Left lung (tissue), 14 donors: ENCODE measurements at regions of chr21 and their contacts with region 1.

Region 1: GRCh38 chr21:43718872-43719747 is at the start of gene PDXK:
- DNase-seq: peak; percentile 82 to 99 (median 90)
- ATAC-seq: peak; percentile 87
- H3K4me3 ChIP-seq: peak within 1 kb of the TSS; percentile 96 to 99
- H3K27ac ChIP-seq: peak within 1 kb of the TSS; percentile 96 to 98
- H3K4me1 ChIP-seq: peaks cover 23 to 52% of the 10 kb centered on the region in 2 donors
- H3K27me3 ChIP-seq: no peaks in the 10 kb centered on the region
- CTCF ChIP-seq: no peak
- polyA plus RNA-seq, gene PDXK: 36.9 to 55.3 (median 39.5) TPM

Region 2: GRCh38 chr21:43295066-43295958 is 423.8 kb before region 1 on chr21:
- intact Hi-C with region 1: no loop called
- DNase-seq: no peak
- ATAC-seq: no peak
- H3K4me3 ChIP-seq: no peak overlapping the region
- H3K27ac ChIP-seq: no peak overlapping the region
- H3K4me1 ChIP-seq: no peaks in the 10 kb centered on the region
- H3K27me3 ChIP-seq: no peaks in the 10 kb centered on the region
- CTCF ChIP-seq: no peak

Region 3: GRCh38 chr21:43613755-43614638 is 105.1 kb before region 1 on chr21:
- intact Hi-C with region 1: no loop called
- DNase-seq: peak in 2 of 4 donors; percentile 24 to 63
- ATAC-seq: no peak
- H3K4me3 ChIP-seq: no peak overlapping the region
- H3K27ac ChIP-seq: no peak overlapping the region
- H3K4me1 ChIP-seq: peaks cover 5 to 14% of the 10 kb centered on the region in 2 donors
- H3K27me3 ChIP-seq: no peaks in the 10 kb centered on the region
- CTCF ChIP-seq: no peak

Region 4: GRCh38 chr21:43775795-43776430 is 56.8 kb after region 1 on chr21 and contains the start of gene CSTB:
- intact Hi-C with region 1: loop called in 1 of 2 experiments (anchors 10 kb)
- DNase-seq: peak; percentile 74 to 98 (median 84)
- ATAC-seq: peak; percentile 79
- H3K4me3 ChIP-seq: peak within 1 kb of the TSS; percentile 77 to 97
- H3K27ac ChIP-seq: peak within 1 kb of the TSS; percentile 85 to 92
- H3K4me1 ChIP-seq: peaks cover 8 to 42% of the 10 kb centered on the region in 2 donors
- H3K27me3 ChIP-seq: no peaks in the 10 kb centered on the region
- CTCF ChIP-seq: no peak
- polyA plus RNA-seq, gene CSTB: 36.5 to 43.4 (median 37.4) TPM

Region 5: GRCh38 chr21:43921979-43922945 is 203.2 kb after region 1 on chr21:
- intact Hi-C with region 1: no loop called
- DNase-seq: peak in 1 of 4 donors; percentile 48
- ATAC-seq: no peak
- H3K4me3 ChIP-seq: no peak overlapping the region
- H3K27ac ChIP-seq: no peak overlapping the region
- H3K4me1 ChIP-seq: peaks cover 0 to 39% of the 10 kb centered on the region in 2 donors
- H3K27me3 ChIP-seq: no peaks in the 10 kb centered on the region
- CTCF ChIP-seq: no peak